Activated naive CD4-positive, alpha-beta T cell treated with anti-CD3 and anti-CD28 coated beads for 36 hours (primary cell): ENCODE measurements at regions of chr21 and their contacts with region 1.

Region 1: GRCh38 chr21:44845399-44846223 is 27.7 kb upstream of the SUMO3 start:
- DNase-seq: peak; percentile 74
- H3K4me3 Mint-ChIP-seq: peak overlapping the region; percentile 68
- H3K27ac Mint-ChIP-seq: no peak overlapping the region
- H3K4me1 Mint-ChIP-seq: peaks cover 13% of the 10 kb centered on the region
- H3K27me3 Mint-ChIP-seq: no peaks in the 10 kb centered on the region

Region 2: GRCh38 chr21:44709426-44710293 is 136.0 kb before region 1 on chr21:
- CTCF ChIA-PET with region 1: no interaction called
- intact Hi-C with region 1: no loop called
- DNase-seq: peak; percentile 17
- H3K4me3 Mint-ChIP-seq: no peak overlapping the region
- H3K27ac Mint-ChIP-seq: no peak overlapping the region
- H3K4me1 Mint-ChIP-seq: peaks cover 37% of the 10 kb centered on the region
- H3K27me3 Mint-ChIP-seq: peaks cover 84% of the 10 kb centered on the region

Region 3: DNA sequence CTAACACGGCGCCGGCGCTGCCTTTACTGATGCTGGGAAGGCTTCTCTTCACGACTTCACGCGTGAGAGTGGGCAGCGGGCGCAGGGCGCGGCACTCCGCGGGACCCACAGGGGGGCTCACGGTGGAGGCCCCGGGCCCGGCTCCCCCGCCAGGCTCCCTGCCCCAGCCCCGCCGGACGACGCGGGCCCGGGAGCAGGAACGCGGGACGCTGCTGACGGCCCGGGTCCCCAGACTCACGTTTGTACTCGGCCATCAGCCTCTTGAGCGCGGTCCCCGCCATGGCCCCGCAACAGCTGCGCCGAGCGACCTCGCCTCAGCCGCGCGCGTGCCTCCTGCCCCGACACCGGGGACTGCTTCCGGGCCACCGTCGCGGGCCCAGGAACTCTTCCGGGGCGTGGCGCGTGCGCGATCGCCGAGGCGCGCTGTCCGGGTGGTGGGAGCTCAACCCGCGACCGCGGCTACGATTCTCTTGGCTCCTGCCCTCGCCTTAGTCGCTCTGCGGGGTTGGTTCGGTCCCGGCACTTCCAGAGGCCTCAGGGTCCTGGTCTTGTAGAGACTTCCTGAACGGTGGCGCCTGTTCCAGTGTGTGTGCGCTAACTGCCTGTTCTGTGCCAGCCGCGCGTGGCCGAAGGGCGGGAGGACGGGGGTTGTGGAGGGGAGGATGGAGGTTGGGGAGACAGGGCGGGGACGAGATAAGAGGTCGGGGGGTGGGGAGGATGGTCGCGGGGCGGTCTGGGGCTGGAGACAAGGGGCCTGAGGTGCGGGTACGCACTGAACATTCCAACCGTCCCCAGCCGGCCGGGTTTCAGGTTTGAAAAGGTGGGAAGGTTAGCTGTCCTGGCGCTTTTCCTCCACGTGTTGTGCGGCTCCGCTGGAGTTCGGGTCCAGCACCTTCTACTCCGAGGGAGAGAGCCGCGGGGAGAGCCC is 43.9 kb before region 1 on chr21 and contains the start of gene UBE2G2:
- CTCF ChIA-PET with region 1: interaction called, 6 read pairs
- intact Hi-C with region 1: loop called (anchors 1 kb)
- DNase-seq: peak; percentile 83
- H3K4me3 Mint-ChIP-seq: peak within 1 kb of the TSS; percentile 98
- H3K27ac Mint-ChIP-seq: peak within 1 kb of the TSS; percentile 83
- H3K4me1 Mint-ChIP-seq: peaks cover 58% of the 10 kb centered on the region
- H3K27me3 Mint-ChIP-seq: no peaks in the 10 kb centered on the region
- total RNA-seq, gene UBE2G2: 94.0 to 95.2 TPM

Region 4: DNA sequence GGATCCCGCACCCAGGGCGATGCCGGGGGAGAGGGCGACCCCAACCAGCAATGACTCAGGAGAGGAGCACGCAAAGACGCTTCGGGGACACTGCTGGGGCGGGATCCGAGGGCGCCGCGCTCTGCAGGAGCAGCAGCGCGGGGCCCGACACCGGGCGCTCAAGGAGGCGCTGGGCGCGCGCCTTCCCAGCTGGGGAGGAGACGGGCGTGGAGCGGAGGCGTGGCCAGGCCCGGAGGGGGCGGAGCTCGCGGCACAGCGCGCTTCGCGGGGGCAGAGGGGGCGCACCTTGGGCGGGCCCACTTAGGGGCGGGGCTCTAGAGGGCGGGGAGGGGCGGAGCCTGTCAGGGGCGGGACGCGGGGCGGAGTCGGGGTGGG is 28.1 kb before region 1 on chr21:
- CTCF ChIA-PET with region 1: no interaction called
- intact Hi-C with region 1: loop called (anchors 2 kb)
- DNase-seq: peak; percentile 95
- H3K4me3 Mint-ChIP-seq: peak overlapping the region; percentile 65
- H3K27ac Mint-ChIP-seq: no peak overlapping the region
- H3K4me1 Mint-ChIP-seq: peaks cover 15% of the 10 kb centered on the region
- H3K27me3 Mint-ChIP-seq: no peaks in the 10 kb centered on the region

Region 5: DNA sequence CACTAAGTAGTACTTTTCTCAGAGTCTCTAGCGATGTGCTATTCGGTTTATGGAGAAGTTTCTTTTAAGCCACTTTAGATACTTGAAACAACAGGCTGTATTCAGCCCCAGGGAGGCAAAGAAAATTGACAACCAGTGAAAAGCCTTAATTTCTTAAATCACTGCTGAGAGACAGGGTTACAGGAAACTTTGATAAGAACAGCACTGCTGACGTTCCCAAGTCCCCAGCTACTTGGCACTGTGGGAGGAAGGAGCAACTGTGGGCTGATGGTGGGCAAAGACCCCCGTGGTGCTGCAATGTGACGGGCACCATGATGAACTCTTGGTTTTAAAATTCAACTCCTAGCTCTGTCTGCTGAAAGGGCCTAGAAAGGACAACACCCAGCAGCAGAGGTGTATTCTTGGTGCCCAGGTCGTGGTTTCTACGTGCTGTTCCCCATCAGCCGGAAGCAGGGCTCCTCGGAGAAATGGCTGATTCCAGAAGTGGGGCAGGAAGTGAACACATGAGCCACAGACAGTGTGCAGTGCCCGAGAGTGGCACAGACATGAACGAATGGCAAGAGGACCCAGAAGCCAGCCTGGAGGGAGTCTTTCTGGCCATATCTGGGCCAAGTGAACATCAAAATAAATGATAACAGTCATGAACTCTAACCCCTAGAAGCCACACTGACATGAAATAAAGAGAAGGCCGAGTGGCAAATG is 22.5 kb after region 1 on chr21:
- CTCF ChIA-PET with region 1: interaction called, 3 read pairs
- intact Hi-C with region 1: loop called (anchors 1 kb)
- DNase-seq: peak; percentile 83
- H3K4me3 Mint-ChIP-seq: peak overlapping the region; percentile 67
- H3K27ac Mint-ChIP-seq: peak overlapping the region; percentile 86
- H3K4me1 Mint-ChIP-seq: peaks cover 82% of the 10 kb centered on the region
- H3K27me3 Mint-ChIP-seq: no peaks in the 10 kb centered on the region